AG04449 (cell line): ENCODE measurements at regions of chr5 and their contacts with region 1.

Region 1: GRCh38 chr5:169980418-169981053 is at the start of gene INSYN2B:
- DNase-seq: peak; percentile 47
- H3K4me3 ChIP-seq: peak within 1 kb of the TSS; percentile 70
- CTCF ChIP-seq: peak; percentile 78

Region 2: DNA sequence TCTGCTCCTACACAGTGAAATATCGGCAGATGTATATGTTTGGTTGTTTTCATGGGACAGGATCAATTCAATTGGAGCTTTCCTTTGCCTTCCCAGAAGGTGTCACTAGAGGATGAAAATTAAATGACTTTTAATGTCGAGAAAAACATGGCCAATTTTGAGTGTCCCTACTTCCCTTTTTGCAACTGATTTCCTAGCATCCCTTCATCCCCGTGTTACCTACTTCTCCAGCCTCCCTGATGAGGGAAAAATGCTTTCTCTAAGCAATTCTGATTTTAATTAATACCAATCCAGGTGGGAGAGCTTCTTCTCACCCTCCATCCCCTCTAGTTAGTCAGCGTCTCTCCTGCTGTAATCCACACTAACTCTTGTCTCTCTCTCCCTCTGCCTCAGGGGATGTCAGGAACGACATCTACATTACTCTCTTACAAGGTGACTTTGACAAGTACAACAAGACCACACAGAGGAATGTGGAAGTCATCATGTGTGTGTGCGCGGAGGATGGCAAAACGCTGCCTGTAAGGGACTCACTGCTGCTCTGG is 278.6 kb before region 1 on chr5:
- CTCF ChIA-PET with region 1: interaction called, 42 read pairs
- POLR2A ChIA-PET with region 1: interaction called, 8 read pairs
- DNase-seq: no peak
- H3K4me3 ChIP-seq: no peak overlapping the region
- CTCF ChIP-seq: peak; percentile 54

Region 3: DNA sequence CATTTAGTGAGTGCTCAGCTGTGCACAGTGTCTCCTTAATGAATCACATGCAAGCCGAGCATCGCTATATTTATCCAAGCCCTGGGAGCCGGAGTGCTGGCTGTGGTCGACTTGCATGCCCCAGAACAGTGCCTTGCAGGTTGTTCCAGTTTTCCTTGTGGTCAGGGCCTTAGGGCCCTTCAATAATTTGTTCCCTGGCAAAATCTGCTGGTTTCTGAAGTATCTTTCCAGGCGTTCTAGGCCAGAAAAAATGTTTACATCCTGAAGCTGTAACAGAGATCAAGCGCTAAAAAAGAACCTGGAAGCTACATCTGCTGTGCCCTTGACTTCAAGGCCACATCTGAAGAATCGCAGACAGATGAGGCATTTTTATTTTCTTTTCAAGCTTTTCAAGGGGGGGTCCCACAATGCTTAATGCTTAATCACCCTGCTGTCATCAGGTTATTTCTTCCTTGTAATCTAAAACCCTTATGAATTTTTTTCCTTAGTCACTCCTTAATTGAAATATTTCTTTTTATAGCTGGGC is 237.7 kb before region 1 on chr5:
- CTCF ChIA-PET with region 1: interaction called, 36 read pairs
- POLR2A ChIA-PET with region 1: interaction called, 3 read pairs
- DNase-seq: peak; percentile 79
- H3K4me3 ChIP-seq: no peak overlapping the region
- CTCF ChIP-seq: no peak

Region 4: GRCh38 chr5:169921384-169921783 is 59.2 kb before region 1 on chr5:
- CTCF ChIA-PET with region 1: interaction called, 11 read pairs
- POLR2A ChIA-PET with region 1: no interaction called
- DNase-seq: no peak
- H3K4me3 ChIP-seq: no peak overlapping the region
- CTCF ChIP-seq: no peak

Region 5: GRCh38 chr5:169956756-169957155 is 23.8 kb before region 1 on chr5:
- CTCF ChIA-PET with region 1: interaction called, 14 read pairs
- POLR2A ChIA-PET with region 1: no interaction called
- DNase-seq: no peak
- H3K4me3 ChIP-seq: no peak overlapping the region
- CTCF ChIP-seq: no peak

Region 6: DNA sequence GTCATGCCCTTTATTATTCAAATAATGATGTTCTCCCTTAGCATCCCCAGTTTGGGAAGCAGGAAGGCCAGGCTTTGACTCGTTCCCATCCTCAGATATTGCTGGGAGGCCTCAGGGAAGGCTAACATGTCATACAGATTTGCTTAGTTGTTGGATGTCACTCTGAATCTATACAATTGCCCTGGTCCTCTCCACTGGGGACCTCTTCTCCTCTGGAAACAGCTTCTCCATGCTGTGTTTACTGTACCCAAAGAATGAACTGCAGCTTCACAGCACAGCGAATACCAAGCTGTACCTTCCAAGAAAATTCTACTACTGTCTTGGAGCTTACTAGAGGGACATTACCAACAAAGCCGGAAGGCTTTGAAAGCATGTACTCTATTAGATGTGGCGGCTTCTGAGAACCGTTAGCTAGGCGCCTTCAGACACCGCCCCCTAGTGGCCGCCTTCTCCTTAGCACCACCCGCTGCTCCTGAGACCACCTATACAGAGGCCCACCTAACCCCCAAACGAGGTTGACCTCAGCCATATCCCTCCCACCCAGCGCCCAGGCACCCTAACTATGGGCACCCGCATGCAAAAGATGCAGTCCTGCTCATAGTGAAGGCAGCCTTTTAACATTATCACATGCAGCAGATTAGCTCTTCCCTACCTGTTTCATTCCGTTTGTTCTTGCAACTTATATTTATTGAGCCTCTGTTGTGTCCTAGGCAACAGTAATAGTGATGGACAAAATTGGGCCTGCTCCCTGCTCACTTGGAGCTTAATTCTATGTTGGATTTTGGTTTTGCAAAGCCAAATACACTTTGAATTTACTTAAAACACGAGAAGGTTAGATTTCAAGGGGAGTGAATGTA is 90.2 kb after region 1 on chr5:
- CTCF ChIA-PET with region 1: interaction called, 10 read pairs
- POLR2A ChIA-PET with region 1: no interaction called
- DNase-seq: no peak
- H3K4me3 ChIP-seq: no peak overlapping the region
- CTCF ChIP-seq: peak; percentile 79

Region 7: DNA sequence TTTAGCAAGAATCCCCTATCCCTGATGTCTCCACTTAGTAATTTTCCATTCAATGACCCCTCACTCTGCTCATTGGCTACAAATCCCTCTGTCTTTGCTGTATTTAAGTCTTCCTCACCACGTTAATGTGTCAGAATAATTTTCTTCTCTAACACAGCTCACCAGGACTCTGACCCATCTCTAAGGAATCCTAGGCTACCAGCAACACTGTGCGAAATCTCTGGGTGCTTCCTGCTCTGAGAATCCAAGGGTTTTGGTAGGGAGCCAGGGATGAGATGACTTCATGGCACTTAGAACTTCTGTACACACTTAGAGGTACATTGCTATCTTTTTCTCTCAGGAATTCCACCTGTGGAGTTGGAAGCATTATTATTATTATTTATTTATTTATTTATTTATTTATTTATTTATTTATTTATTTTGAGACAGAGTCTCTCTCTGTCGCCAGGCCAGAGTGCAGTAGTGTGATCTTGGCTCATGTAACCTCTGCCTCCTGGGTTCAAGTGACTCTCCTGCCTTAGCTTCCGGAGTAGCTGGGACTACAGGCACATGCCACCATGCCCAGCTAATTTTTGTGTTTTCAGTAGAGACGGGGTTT is 178.7 kb after region 1 on chr5:
- CTCF ChIA-PET with region 1: no interaction called
- POLR2A ChIA-PET with region 1: no interaction called
- DNase-seq: peak; percentile 59
- H3K4me3 ChIP-seq: no peak overlapping the region
- CTCF ChIP-seq: no peak